GM10248 (cell line): ENCODE measurements at regions of chr6 and their contacts with region 1.

Region 1: DNA sequence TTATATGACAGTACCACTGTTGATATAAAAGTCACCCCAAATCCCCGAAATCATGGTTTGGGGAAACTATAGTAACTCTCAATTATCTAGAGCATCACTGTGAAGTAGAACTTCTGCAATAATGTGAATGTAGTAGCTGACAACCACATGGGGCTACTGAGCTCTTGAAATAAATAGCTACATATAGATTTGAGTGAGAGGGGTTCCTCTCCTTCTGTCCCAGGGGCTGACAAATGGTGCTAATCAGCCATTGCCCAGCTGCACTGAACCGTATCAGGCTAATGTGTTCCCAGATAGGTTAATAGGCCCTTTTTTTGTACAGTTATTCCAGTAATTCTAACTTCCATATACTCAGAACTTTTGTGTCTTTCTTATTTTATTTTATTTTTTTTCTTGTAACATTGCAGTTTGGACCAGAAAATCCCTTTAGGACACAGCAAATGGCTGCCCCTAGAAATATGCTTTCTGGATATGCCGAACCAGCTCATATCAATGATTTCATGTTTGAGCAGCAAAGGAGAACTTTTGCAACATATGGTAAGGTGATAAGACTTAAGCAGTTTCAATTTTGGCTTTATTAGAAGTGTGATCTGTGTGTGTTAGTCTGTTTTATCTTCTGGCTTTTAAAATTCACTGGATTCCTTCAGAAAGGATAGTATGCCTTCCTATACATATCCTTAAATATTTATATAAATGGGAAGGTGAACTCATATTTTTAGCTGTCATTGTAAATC is 21.1 kb downstream of the CDC40 start:
- DNase-seq: no peak
- CTCF ChIP-seq: no peak

Region 2: GRCh38 chr6:110179401-110180227 is 21.7 kb before region 1 on chr6 and contains the start of gene WASF1:
- CTCF ChIA-PET with region 1: interaction called, 10 read pairs
- POLR2A ChIA-PET with region 1: no interaction called
- DNase-seq: peak; percentile 89
- CTCF ChIP-seq: peak; percentile 25

Region 3: GRCh38 chr6:110217266-110217665 is 15.9 kb after region 1 on chr6:
- CTCF ChIA-PET with region 1: interaction called, 21 read pairs
- POLR2A ChIA-PET with region 1: no interaction called
- DNase-seq: no peak
- CTCF ChIP-seq: no peak

Region 4: DNA sequence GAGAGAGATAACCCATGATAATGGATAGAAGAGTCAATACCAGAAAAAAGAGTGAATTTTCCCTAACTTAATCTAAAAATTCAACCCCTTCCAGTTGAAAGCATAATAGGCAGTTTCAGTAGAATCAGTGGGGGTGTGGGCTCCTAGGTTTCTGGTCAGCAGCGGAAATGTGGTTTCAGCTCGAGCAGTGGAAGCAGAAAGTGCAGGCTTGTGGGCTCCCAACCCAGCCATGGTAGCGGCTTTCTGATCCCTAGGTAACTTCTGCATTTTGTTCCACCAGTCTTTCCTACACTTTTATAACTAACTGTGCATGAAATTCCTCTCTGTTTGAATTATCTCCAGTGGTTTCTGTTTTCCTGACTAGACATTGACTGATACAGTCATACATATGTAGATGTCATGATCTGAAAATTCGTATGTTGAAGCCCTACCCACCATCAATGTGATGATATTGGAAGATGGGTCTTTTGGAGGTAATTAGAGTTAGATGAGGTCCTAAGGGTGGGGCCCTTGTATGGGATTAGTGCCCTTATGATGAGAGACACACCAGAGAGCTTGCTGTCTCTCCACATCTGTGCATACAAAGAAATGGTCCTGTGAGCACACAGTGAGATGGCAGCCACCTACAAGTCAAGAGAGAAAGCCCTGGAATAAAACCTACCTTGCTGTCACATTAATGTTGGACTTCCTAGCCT is 220.6 kb after region 1 on chr6:
- CTCF ChIA-PET with region 1: no interaction called
- POLR2A ChIA-PET with region 1: no interaction called
- DNase-seq: no peak
- CTCF ChIP-seq: no peak